ENCODE measurements at regions of chr1 and their contacts with region 1.

Region 1: GRCh38 chr1:90964444-90965035 is 57.3 kb downstream of the ZNF644 start:
- DNase-seq: no peak
- ATAC-seq: no peak
- H3K4me3 ChIP-seq: no peak overlapping the region
- H3K27ac ChIP-seq: no peak overlapping the region
- H3K4me1 ChIP-seq: peaks cover 39 to 42% of the 10 kb centered on the region in 2 donors
- H3K27me3 ChIP-seq: no peaks in the 10 kb centered on the region
- CTCF ChIP-seq: peak in 3 of 5 experiments; percentile 34 to 51 (median 43)
- POLR2A ChIP-seq: no peak

Region 2: DNA sequence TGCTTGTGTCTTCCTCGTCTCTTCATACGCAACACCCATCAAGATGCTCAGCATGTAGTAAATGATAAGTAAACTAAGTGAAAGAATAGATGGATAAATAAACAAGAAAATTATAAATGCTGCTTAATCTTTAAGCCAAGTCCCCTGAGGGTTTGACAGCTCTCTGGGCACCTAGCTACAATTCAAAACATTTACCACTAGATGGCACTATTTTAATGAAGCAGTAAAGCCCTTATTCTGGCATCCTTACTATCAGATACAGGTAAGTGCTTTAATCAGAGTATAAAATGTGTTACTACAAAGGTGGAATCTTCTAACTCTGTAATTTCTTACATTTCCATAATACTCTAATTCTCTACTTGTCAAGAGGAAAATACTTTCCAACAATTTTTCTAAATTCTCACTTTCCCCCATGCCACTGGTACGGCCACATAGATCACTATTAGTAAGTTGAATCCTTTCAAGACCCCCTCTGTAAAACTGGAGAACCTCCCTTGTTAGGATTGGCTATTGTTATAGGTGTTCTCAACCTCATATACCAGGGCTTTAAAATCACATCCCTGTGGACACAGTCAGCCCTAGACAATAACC is 385.2 kb before region 1 on chr1:
- in situ Hi-C with region 1: loop called in 3 of 4 experiments (anchors 10 to 25 kb)
- intact Hi-C with region 1: no loop called
- DNase-seq: no peak
- ATAC-seq: no peak
- H3K4me3 ChIP-seq: no peak overlapping the region
- H3K27ac ChIP-seq: no peak overlapping the region
- H3K4me1 ChIP-seq: no peaks in the 10 kb centered on the region
- H3K27me3 ChIP-seq: no peaks in the 10 kb centered on the region
- CTCF ChIP-seq: peak in 4 of 5 experiments; percentile 25 to 64 (median 42)
- POLR2A ChIP-seq: no peak

Region 3: DNA sequence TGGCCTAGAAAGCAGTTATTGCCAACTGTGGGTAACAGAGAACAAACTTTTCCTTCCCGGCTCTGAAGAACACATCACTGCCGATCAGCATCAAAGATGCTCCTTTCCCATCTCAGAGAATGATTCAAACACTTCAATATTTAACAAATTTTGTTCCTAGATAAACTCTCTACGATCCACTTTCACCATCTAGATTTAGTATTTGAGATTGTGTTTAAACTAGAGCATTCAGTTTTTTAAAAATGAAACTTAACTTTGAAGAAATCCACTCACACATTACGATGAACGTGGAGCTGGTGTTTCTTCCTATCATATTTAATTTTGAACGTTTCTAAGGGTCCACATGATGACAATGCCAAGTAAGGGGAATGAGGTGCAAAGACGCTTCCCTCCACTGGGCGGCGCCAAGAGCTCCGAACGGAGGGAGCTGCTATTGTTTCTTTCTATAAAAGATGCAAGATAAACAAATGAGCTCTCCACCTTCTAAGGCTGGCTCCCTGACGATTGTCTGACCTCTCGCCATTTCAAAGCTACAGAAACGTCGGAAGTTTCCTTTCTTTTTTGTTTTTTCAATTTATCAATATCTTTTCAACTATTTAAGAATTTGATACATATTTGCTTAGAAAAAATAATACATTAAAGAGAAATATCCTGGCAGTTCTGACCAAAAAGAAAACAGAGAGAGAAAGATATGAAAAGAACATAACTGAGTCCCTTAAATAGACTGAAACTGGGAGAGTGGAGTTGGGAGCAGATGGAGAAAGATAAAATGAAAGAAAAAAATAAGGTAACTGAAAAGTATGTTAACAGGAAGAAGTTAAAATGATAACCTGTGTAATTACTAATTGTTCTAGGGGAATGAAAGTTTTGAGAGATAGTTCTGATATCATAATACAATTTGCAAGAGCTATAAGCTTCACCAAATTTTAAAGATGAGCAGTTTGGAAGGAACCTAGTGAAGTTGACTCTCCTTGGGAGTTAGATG is 243.0 kb before region 1 on chr1:
- in situ Hi-C with region 1: loop called in 2 of 4 experiments (anchors 10 to 25 kb)
- intact Hi-C with region 1: loop called (anchors 5 kb)
- DNase-seq: no peak
- ATAC-seq: peak in 1 of 2 donors; percentile 45
- H3K4me3 ChIP-seq: no peak overlapping the region
- H3K27ac ChIP-seq: no peak overlapping the region
- H3K4me1 ChIP-seq: peaks cover 31 to 49% of the 10 kb centered on the region in 2 donors
- H3K27me3 ChIP-seq: peaks cover 95% of the 10 kb centered on the region in 3 donors
- CTCF ChIP-seq: peak in 4 of 5 experiments; percentile 45 to 70 (median 56)
- POLR2A ChIP-seq: no peak

Region 4: GRCh38 chr1:90850898-90851710 is 113.4 kb before region 1 on chr1:
- in situ Hi-C with region 1: loop called in 1 of 4 experiments (anchors 25 kb)
- intact Hi-C with region 1: loop called (anchors 2 kb)
- DNase-seq: peak; percentile 65 to 67
- ATAC-seq: peak; percentile 89 to 95
- H3K4me3 ChIP-seq: peak overlapping the region; percentile 79 to 100 (median 83)
- H3K27ac ChIP-seq: peak overlapping the region; percentile 62 to 75 (median 63)
- H3K4me1 ChIP-seq: peaks cover 0 to 7% of the 10 kb centered on the region in 2 donors
- H3K27me3 ChIP-seq: no peaks in the 10 kb centered on the region
- CTCF ChIP-seq: peak in 4 of 5 experiments; percentile 40 to 91 (median 65)
- POLR2A ChIP-seq: peak in 1 of 2 donors; percentile 32

Region 5: GRCh38 chr1:90919900-90920299 is 44.6 kb before region 1 on chr1:
- in situ Hi-C with region 1: no loop called
- intact Hi-C with region 1: loop called (anchors 2 kb)
- DNase-seq: no peak
- ATAC-seq: peak; percentile 95 to 98
- H3K4me3 ChIP-seq: no peak overlapping the region
- H3K27ac ChIP-seq: peak overlapping the region; percentile 15 to 44 (median 30)
- H3K4me1 ChIP-seq: peaks cover 59 to 62% of the 10 kb centered on the region in 2 donors
- H3K27me3 ChIP-seq: no peaks in the 10 kb centered on the region
- CTCF ChIP-seq: no peak
- POLR2A ChIP-seq: no peak

Region 6: DNA sequence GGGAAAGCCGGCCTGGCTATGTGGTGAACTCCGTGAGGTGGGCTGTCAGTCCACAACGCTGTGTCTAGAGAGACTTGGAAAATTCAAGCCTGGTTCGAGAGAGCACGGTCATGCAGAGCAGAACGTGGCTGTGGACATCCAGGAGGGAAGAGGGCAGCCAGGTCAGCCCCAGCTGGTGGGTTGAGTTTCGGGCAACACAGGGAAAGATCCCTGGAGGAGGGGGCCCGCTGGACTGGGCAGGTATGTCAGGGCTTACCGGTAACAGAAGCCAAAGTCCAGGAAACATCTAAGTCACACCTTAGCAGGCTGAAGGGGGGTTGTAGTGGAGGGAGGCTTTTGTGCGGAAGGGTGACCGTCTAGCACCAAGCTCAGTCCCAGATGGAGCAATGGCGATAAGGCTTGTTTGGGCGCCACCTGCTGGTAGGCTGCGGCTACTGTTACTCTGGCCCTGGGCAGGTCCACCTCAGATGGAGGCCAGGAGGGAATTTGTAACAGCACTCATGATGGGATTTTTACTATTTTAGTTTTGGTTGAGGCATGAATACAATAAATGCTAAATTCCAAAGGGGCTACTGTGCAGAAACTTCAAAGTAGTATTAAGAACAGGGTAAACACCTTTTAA is 200.6 kb after region 1 on chr1:
- in situ Hi-C with region 1: no loop called
- intact Hi-C with region 1: no loop called
- DNase-seq: peak; percentile 27 to 47
- ATAC-seq: peak; percentile 56 to 87
- H3K4me3 ChIP-seq: no peak overlapping the region
- H3K27ac ChIP-seq: no peak overlapping the region
- H3K4me1 ChIP-seq: no peaks in the 10 kb centered on the region
- H3K27me3 ChIP-seq: no peaks in the 10 kb centered on the region
- CTCF ChIP-seq: peak; percentile 61 to 89 (median 78)
- POLR2A ChIP-seq: no peak

Measured in gastrocnemius medialis (tissue), 4 donors.